Esophagus muscularis mucosa (tissue), 4 donors: ENCODE measurements at regions of chr15 and their contacts with region 1.

Region 1: GRCh38 chr15:60362321-60363086 is 35.3 kb downstream of the ANXA2 start:
- DNase-seq: no peak
- H3K4me3 ChIP-seq: no peak overlapping the region
- H3K27ac ChIP-seq: peak overlapping the region; percentile 29 to 77 (median 45)
- H3K4me1 ChIP-seq: peaks cover 35 to 52% (median 42%) of the 10 kb centered on the region in 4 donors
- H3K27me3 ChIP-seq: no peaks in the 10 kb centered on the region
- CTCF ChIP-seq: no peak
- EP300 ChIP-seq: no peak
- POLR2A ChIP-seq: no peak

Region 2: GRCh38 chr15:60184579-60184978 is 177.9 kb before region 1 on chr15:
- intact Hi-C with region 1: no loop called
- DNase-seq: no peak
- H3K4me3 ChIP-seq: no peak overlapping the region
- H3K27ac ChIP-seq: no peak overlapping the region
- H3K4me1 ChIP-seq: no peaks in the 10 kb centered on the region
- H3K27me3 ChIP-seq: peaks cover 0 to 33% (median 0%) of the 10 kb centered on the region in 4 donors
- CTCF ChIP-seq: no peak
- EP300 ChIP-seq: no peak
- POLR2A ChIP-seq: no peak

Region 3: DNA sequence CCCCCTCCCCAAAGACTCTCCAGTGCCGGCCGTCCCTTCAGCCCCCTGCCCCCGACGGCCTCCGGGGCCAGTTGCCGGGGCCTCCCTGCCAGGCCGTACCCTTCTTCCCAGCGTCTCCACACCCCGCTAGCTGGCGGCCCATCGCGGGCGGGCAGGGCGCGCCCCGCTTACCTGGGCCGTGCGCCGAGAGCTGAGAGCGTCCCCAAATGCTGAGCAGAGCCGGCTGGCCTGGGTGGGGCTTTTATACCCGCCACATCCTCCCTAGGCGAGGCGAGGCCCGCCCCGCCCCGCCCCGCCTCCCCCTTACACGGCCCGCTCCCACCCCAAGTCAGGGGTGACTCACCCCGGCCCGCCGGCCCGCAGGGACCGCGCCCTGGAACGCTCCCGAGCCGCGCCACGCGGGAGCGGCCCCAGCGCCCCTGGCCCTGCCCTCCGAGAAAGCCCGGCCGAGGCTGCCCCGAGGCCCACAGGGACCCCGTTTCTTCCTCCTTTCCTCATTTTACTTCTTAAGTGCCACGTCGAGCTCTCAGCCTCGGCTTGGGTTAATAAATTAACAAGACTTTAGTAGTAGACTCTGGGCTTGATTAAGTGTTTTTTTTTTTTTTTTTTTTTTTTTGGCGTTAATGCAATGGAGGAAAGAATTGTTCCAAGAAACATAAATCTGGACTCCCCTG is 35.4 kb after region 1 on chr15 and contains the start of gene ANXA2:
- intact Hi-C with region 1: loop called (anchors 5 kb)
- DNase-seq: peak; percentile 95
- H3K4me3 ChIP-seq: peak within 1 kb of the TSS; percentile 64 to 99 (median 84)
- H3K27ac ChIP-seq: peak within 1 kb of the TSS; percentile 92 to 96 (median 94)
- H3K4me1 ChIP-seq: peaks cover 40 to 57% (median 52%) of the 10 kb centered on the region in 4 donors
- H3K27me3 ChIP-seq: no peaks in the 10 kb centered on the region
- CTCF ChIP-seq: no peak
- EP300 ChIP-seq: no peak
- POLR2A ChIP-seq: peak; percentile 92
- total RNA-seq, gene ANXA2: 333 to 606 (median 406) TPM

Region 4: GRCh38 chr15:60444289-60444912 is 81.9 kb after region 1 on chr15:
- intact Hi-C with region 1: loop called (anchors 2 kb)
- DNase-seq: no peak
- H3K4me3 ChIP-seq: no peak overlapping the region
- H3K27ac ChIP-seq: no peak overlapping the region
- H3K4me1 ChIP-seq: no peaks in the 10 kb centered on the region
- H3K27me3 ChIP-seq: no peaks in the 10 kb centered on the region
- CTCF ChIP-seq: peak; percentile 55 to 71 (median 69)
- EP300 ChIP-seq: no peak
- POLR2A ChIP-seq: no peak